ENCODE measurements at regions of chr15 and their contacts with region 1.

Region 1: GRCh38 chr15:34318277-34319079 is 19.1 kb downstream of the SLC12A6 start:
- DNase-seq: no peak
- ATAC-seq: peak; percentile 83
- H3K4me3 Mint-ChIP-seq: peak overlapping the region; percentile 94
- H3K27ac Mint-ChIP-seq: peak overlapping the region; percentile 91
- H3K4me1 Mint-ChIP-seq: peaks cover 74% of the 10 kb centered on the region
- H3K27me3 Mint-ChIP-seq: no peaks in the 10 kb centered on the region
- CTCF ChIP-seq: no peak

Region 2: DNA sequence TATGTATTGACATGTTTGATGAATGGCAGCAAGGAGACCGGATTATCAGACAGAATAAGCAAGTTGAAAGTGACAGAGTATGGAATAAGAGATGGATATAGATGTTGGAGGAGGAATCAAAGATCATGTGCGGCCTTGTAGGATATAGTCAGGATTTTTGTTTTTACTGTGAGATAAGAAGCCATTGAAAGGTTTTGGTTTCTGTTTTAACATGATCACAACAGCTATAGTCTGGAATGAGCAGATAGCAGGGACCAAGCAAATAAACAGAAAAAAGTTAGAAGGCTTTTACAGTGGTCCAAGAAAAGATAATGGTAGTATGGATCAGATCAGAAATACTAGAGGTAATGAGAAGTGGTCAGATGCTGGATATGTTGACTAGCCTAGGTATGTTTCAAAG is 33.5 kb before region 1 on chr15:
- CTCF ChIA-PET with region 1: no interaction called
- POLR2A ChIA-PET with region 1: no interaction called
- intact Hi-C with region 1: loop called (anchors 5 kb)
- DNase-seq: no peak
- ATAC-seq: no peak
- H3K4me3 Mint-ChIP-seq: no peak overlapping the region
- H3K27ac Mint-ChIP-seq: peak overlapping the region; percentile 21
- H3K4me1 Mint-ChIP-seq: peaks cover 21% of the 10 kb centered on the region
- H3K27me3 Mint-ChIP-seq: no peaks in the 10 kb centered on the region
- CTCF ChIP-seq: no peak

Region 3: DNA sequence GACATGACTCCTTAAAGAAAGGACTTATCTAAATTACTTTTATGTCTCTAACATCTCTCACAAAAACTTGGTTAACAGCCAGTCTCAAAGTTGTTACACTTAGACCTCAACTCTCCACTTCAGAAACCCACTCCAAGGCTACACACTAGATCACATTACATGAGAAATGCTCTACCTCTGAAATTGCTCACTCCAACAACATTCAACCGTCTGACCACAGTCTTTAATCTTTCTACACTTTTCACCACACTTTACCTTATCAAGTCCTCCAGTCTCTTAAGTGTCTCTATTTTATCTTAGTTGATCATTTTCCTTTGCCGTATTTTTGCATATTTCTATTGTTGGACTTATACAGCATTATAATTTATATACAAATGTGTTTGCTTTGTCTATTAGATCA is 13.3 kb after region 1 on chr15:
- CTCF ChIA-PET with region 1: interaction called, 3 read pairs
- POLR2A ChIA-PET with region 1: interaction called, 31 read pairs
- intact Hi-C with region 1: loop called (anchors 1 kb)
- DNase-seq: no peak
- ATAC-seq: no peak
- H3K4me3 Mint-ChIP-seq: peak overlapping the region; percentile 2
- H3K27ac Mint-ChIP-seq: peak overlapping the region; percentile 99
- H3K4me1 Mint-ChIP-seq: peaks cover 91% of the 10 kb centered on the region
- H3K27me3 Mint-ChIP-seq: no peaks in the 10 kb centered on the region
- CTCF ChIP-seq: no peak

Region 4: GRCh38 chr15:34337557-34338306 is 19.3 kb after region 1 on chr15 and contains the start of gene SLC12A6:
- CTCF ChIA-PET with region 1: interaction called, 3 read pairs
- POLR2A ChIA-PET with region 1: interaction called, 21 read pairs
- intact Hi-C with region 1: loop called (anchors 2 kb)
- DNase-seq: peak; percentile 93
- ATAC-seq: peak; percentile 82
- H3K4me3 Mint-ChIP-seq: peak within 1 kb of the TSS; percentile 99
- H3K27ac Mint-ChIP-seq: peak within 1 kb of the TSS; percentile 99
- H3K4me1 Mint-ChIP-seq: peaks cover 66% of the 10 kb centered on the region
- H3K27me3 Mint-ChIP-seq: no peaks in the 10 kb centered on the region
- CTCF ChIP-seq: no peak
- total RNA-seq, gene SLC12A6: 61.3 and 74.4 TPM in 2 replicates

Region 5: GRCh38 chr15:34837246-34838016 is 519.0 kb after region 1 on chr15:
- CTCF ChIA-PET with region 1: no interaction called
- POLR2A ChIA-PET with region 1: no interaction called
- intact Hi-C with region 1: no loop called
- DNase-seq: no peak
- ATAC-seq: no peak
- H3K4me3 Mint-ChIP-seq: no peak overlapping the region
- H3K27ac Mint-ChIP-seq: no peak overlapping the region
- H3K4me1 Mint-ChIP-seq: no peaks in the 10 kb centered on the region
- H3K27me3 Mint-ChIP-seq: peaks cover 12% of the 10 kb centered on the region
- CTCF ChIP-seq: no peak

Measured in activated B cell treated with CpG ODN at 0.5 μM for 24 hours (primary cell).